Naive thymus-derived CD4-positive, alpha-beta T cell (primary cell): ENCODE measurements at regions of chr15 and their contacts with region 1.

Region 1: DNA sequence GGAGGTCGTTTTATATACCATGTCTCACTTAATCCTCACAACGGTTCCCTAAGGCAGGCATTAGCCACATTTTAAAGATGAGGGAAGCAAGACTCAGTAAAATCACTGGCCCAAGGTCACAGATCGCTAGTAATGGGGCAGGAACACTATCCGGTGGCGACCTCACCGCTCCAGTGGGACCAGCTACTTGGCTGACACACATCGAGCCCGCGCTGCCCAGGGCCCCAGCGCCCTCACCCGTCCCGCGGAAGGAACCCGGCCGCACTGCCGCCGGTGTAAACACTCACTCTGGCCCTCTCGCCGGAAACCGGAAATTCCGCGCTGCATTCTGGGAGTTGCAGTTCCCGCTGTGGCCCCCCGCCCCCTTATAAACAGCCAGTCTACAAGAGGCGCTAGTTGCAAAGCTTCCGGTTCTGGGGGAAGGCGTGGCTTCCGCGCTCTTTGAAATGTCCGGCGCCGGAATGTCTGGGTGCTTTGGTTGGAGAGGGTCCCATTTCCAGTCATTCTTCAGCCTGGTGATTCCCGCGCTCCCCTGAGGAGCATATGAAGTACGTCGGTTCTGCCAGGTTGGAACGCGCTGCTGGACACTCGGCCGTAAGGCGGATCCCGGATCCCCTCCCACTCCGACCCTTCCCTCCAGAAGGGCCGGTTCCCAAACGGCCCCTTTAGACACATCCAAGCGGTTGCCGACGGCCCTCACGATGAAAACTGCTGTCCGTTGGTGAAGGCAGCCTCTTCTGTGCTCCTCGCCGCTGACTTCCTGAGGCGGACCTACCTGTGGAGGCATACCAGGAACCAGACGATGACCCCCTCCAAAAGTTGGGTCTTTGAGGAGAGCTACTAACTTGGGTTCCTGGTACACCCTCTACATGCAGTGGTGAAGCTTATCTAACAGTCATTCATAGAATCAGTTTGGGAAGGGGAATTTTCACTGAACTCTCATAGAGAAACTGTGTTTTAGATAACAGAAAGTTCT is at the start of gene UBL7:
- DNase-seq: peak; percentile 81 to 95 (median 90)
- ATAC-seq: peak; percentile 99
- H3K4me3 ChIP-seq: peak within 1 kb of the TSS; percentile 91
- H3K4me3 Mint-ChIP-seq: peak within 1 kb of the TSS; percentile 88 to 98 (median 92)
- H3K27ac ChIP-seq: peak within 1 kb of the TSS; percentile 86
- H3K27ac Mint-ChIP-seq: peak within 1 kb of the TSS; percentile 78 to 96 (median 92)
- H3K4me1 ChIP-seq: peaks cover 8 to 15% of the 10 kb centered on the region in 2 donors
- H3K4me1 Mint-ChIP-seq: peaks cover 25 to 62% (median 55%) of the 10 kb centered on the region in 7 donors
- H3K27me3 ChIP-seq: no peaks in the 10 kb centered on the region
- H3K27me3 Mint-ChIP-seq: no peaks in the 10 kb centered on the region
- total RNA-seq, gene UBL7: 20.2 to 50.7 (median 40.6) TPM

Region 2: GRCh38 chr15:73991726-73992593 is 469.2 kb before region 1 on chr15 and contains the start of gene STOML1:
- CTCF ChIA-PET with region 1: no interaction called
- POLR2A ChIA-PET with region 1: no interaction called
- intact Hi-C with region 1: loop called (anchors 1 kb)
- DNase-seq: peak; percentile 85 to 99 (median 91)
- ATAC-seq: peak; percentile 91
- H3K4me3 ChIP-seq: peak within 1 kb of the TSS; percentile 68
- H3K4me3 Mint-ChIP-seq: peak within 1 kb of the TSS; percentile 82 to 100 (median 98)
- H3K27ac ChIP-seq: peak within 1 kb of the TSS; percentile 90
- H3K27ac Mint-ChIP-seq: peak within 1 kb of the TSS; percentile 72 to 99 (median 87)
- H3K4me1 ChIP-seq: peaks cover 33 to 35% of the 10 kb centered on the region in 2 donors
- H3K4me1 Mint-ChIP-seq: peaks cover 28 to 62% (median 49%) of the 10 kb centered on the region in 7 donors
- H3K27me3 ChIP-seq: no peaks in the 10 kb centered on the region
- H3K27me3 Mint-ChIP-seq: no peaks in the 10 kb centered on the region
- total RNA-seq, gene STOML1: 7.5 to 14.5 (median 12.3) TPM

Region 3: GRCh38 chr15:74318376-74318830 is 142.8 kb before region 1 on chr15:
- CTCF ChIA-PET with region 1: no interaction called
- POLR2A ChIA-PET with region 1: no interaction called
- intact Hi-C with region 1: no loop called
- DNase-seq: no peak
- ATAC-seq: no peak
- H3K4me3 ChIP-seq: no peak overlapping the region
- H3K4me3 Mint-ChIP-seq: no peak overlapping the region
- H3K27ac ChIP-seq: no peak overlapping the region
- H3K27ac Mint-ChIP-seq: no peak overlapping the region
- H3K4me1 ChIP-seq: peaks cover 11 to 20% of the 10 kb centered on the region in 2 donors
- H3K4me1 Mint-ChIP-seq: peaks cover 15 to 35% (median 32%) of the 10 kb centered on the region in 7 donors
- H3K27me3 ChIP-seq: no peaks in the 10 kb centered on the region
- H3K27me3 Mint-ChIP-seq: no peaks in the 10 kb centered on the region

Region 4: DNA sequence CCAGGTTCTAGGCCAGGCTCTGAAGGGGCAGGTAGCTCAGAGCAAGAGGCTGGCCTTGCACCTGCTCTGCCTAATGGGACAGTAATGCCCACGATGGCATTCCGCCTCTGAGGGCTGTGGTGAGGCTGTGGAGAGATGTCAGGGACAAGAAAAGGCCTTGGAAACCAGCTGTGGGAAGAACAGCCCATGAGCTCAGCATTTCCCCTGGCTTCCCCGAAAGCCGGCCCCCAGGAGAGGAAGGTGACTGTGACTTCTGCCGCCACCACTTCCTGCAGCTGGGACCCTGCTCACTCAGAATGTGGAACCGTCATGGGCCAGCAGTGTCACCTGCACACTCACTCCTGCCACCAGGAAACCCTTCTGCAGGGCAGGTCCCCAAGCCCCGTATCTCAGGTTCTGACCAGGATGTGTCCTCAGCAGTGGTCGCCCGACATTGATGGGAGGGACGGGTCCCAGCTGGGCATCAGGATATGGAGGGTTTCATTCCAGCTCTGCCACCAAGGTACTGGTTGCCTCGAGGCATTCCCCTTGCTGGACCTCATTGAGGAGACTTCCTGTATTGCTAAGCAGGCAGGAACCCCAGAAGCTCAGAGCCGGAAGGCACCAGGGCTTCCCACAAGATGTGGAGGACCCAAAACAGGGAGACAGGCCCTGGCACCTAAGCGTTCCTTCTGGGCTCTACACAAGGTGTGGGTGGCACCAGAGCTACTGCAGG is 58.1 kb before region 1 on chr15:
- CTCF ChIA-PET with region 1: no interaction called
- POLR2A ChIA-PET with region 1: interaction called, 3 read pairs
- intact Hi-C with region 1: loop called in 1 of 2 experiments (anchors 2 kb)
- DNase-seq: peak in 6 of 9 donors; percentile 26 to 80 (median 32)
- ATAC-seq: peak; percentile 75
- H3K4me3 ChIP-seq: peak overlapping the region; percentile 10
- H3K4me3 Mint-ChIP-seq: peak overlapping the region in 9 of 10 donors; percentile 19 to 67 (median 49)
- H3K27ac ChIP-seq: no peak overlapping the region
- H3K27ac Mint-ChIP-seq: peak overlapping the region in 7 of 9 donors; percentile 2 to 85 (median 49)
- H3K4me1 ChIP-seq: peaks cover 43 to 57% of the 10 kb centered on the region in 2 donors
- H3K4me1 Mint-ChIP-seq: peaks cover 40 to 70% (median 53%) of the 10 kb centered on the region in 7 donors
- H3K27me3 ChIP-seq: no peaks in the 10 kb centered on the region
- H3K27me3 Mint-ChIP-seq: no peaks in the 10 kb centered on the region

Region 5: GRCh38 chr15:74449643-74450205 is 11.4 kb before region 1 on chr15:
- CTCF ChIA-PET with region 1: no interaction called
- POLR2A ChIA-PET with region 1: no interaction called
- intact Hi-C with region 1: no loop called
- DNase-seq: no peak
- ATAC-seq: no peak
- H3K4me3 ChIP-seq: no peak overlapping the region
- H3K4me3 Mint-ChIP-seq: no peak overlapping the region
- H3K27ac ChIP-seq: no peak overlapping the region
- H3K27ac Mint-ChIP-seq: peak overlapping the region in 1 of 9 donors; percentile 49
- H3K4me1 ChIP-seq: no peaks in the 10 kb centered on the region
- H3K4me1 Mint-ChIP-seq: peaks cover 0 to 17% (median 3%) of the 10 kb centered on the region in 7 donors
- H3K27me3 ChIP-seq: no peaks in the 10 kb centered on the region
- H3K27me3 Mint-ChIP-seq: no peaks in the 10 kb centered on the region

Region 6: DNA sequence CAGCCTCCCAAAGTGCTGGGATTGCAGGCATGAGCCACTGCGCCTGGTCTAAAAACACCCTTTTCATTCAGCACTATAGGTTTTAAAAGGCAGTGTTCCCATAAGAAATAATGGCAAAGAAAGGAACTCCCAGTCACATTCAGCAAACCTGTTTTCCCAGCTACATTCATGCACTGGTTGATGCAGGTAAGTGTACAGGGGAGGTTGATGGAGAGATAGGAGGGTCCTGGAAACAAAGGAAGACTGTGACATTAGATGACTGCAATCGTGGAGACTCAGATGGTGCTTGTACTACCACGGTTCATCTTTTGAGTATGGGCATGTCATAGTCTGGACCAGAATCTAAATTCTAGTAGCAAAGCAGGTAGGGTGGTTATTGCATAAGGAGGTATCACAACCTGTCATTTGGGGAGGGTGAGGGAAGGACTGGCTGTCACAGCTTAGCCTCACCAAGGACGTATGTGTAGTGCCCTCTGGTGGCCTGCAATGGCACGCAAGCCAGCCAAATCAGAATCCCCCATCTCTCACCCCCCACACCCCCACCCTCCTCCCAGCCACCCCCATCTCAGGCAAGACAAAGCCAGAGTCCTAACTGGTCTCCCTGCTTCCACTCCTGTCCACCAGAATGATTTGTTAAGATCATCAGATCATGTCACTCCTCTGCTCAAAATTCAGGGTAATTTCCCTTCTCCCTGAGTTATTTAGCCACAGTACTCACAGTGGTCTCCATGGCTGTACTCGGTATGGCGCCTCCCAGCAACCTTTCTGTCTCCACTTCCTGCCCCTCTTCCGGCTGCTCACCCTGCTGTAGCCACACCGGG is 28.6 kb after region 1 on chr15:
- CTCF ChIA-PET with region 1: no interaction called
- POLR2A ChIA-PET with region 1: no interaction called
- intact Hi-C with region 1: loop called (anchors 1 kb)
- DNase-seq: peak; percentile 26 to 67 (median 51)
- ATAC-seq: peak; percentile 97
- H3K4me3 ChIP-seq: no peak overlapping the region
- H3K4me3 Mint-ChIP-seq: peak overlapping the region in 7 of 10 donors; percentile 7 to 40 (median 25)
- H3K27ac ChIP-seq: no peak overlapping the region
- H3K27ac Mint-ChIP-seq: peak overlapping the region in 6 of 9 donors; percentile 39 to 71 (median 62)
- H3K4me1 ChIP-seq: peaks cover 5 to 11% of the 10 kb centered on the region in 2 donors
- H3K4me1 Mint-ChIP-seq: peaks cover 7 to 20% (median 13%) of the 10 kb centered on the region in 7 donors
- H3K27me3 ChIP-seq: no peaks in the 10 kb centered on the region
- H3K27me3 Mint-ChIP-seq: no peaks in the 10 kb centered on the region

Region 7: GRCh38 chr15:74695597-74696397 is 234.6 kb after region 1 on chr15 and contains the start of gene EDC3:
- CTCF ChIA-PET with region 1: no interaction called
- POLR2A ChIA-PET with region 1: no interaction called
- intact Hi-C with region 1: loop called in 1 of 2 experiments (anchors 1 kb)
- DNase-seq: peak; percentile 69 to 87 (median 84)
- ATAC-seq: peak; percentile 93
- H3K4me3 ChIP-seq: peak within 1 kb of the TSS; percentile 71
- H3K4me3 Mint-ChIP-seq: peak within 1 kb of the TSS; percentile 96 to 100 (median 100)
- H3K27ac ChIP-seq: peak within 1 kb of the TSS; percentile 86
- H3K27ac Mint-ChIP-seq: peak within 1 kb of the TSS; percentile 97 to 100 (median 99)
- H3K4me1 ChIP-seq: peaks cover 12 to 14% of the 10 kb centered on the region in 2 donors
- H3K4me1 Mint-ChIP-seq: peaks cover 27 to 54% (median 48%) of the 10 kb centered on the region in 7 donors
- H3K27me3 ChIP-seq: no peaks in the 10 kb centered on the region
- H3K27me3 Mint-ChIP-seq: peaks cover 0 to 3% (median 0%) of the 10 kb centered on the region in 5 donors
- total RNA-seq, gene EDC3: 29.0 to 45.3 (median 38.7) TPM

Region 8: DNA sequence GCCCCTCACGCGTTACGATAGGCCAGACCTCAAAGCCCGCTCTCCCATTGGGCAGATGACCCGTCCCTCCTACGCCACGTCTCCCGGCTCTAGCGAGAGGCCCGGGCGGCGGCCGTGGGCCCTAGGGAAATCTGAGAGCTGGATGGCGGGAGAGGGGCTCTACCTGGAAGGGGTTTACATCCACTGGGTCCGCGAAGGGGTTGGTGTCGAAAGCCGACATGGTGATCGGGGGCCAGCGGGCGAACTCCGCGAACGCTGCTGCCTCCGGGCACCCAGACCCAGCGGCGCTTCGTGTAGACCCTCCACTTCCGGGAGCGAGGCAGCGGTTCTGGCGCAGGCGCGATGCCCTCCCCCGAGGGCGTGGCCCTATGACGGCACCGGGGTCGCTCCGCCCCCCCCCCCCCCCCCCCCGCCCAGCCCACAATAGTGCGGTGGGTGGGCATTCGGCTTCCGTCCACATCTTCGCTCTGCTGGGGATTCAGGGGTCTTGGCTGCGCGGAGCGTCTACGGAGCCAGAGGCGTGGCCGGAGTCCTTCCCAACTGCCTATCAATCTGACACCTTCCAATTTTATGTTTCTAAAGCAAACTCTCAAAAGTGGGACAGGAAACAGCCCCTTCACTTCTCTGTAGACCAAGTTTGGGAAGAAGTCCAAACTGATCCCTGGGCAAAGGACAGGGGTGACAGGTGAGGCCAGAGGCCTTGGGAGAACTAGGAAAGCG is 412.0 kb after region 1 on chr15 and contains the start of gene SCAMP2:
- CTCF ChIA-PET with region 1: no interaction called
- POLR2A ChIA-PET with region 1: no interaction called
- intact Hi-C with region 1: loop called in 1 of 2 experiments (anchors 1 kb)
- DNase-seq: peak; percentile 83 to 94 (median 91)
- ATAC-seq: peak; percentile 95
- H3K4me3 ChIP-seq: peak within 1 kb of the TSS; percentile 86
- H3K4me3 Mint-ChIP-seq: peak within 1 kb of the TSS; percentile 92 to 100 (median 98)
- H3K27ac ChIP-seq: peak within 1 kb of the TSS; percentile 98
- H3K27ac Mint-ChIP-seq: peak within 1 kb of the TSS; percentile 88 to 99 (median 96)
- H3K4me1 ChIP-seq: peaks cover 38 to 39% of the 10 kb centered on the region in 2 donors
- H3K4me1 Mint-ChIP-seq: peaks cover 31 to 54% (median 45%) of the 10 kb centered on the region in 7 donors
- H3K27me3 ChIP-seq: no peaks in the 10 kb centered on the region
- H3K27me3 Mint-ChIP-seq: peaks cover 0 to 8% (median 0%) of the 10 kb centered on the region in 5 donors
- total RNA-seq, gene SCAMP2: 78.9 to 130 (median 116) TPM

Region 9: GRCh38 chr15:74956648-74957300 is 495.6 kb after region 1 on chr15 and contains the start of gene RPP25:
- CTCF ChIA-PET with region 1: no interaction called
- POLR2A ChIA-PET with region 1: no interaction called
- intact Hi-C with region 1: loop called in 1 of 2 experiments (anchors 10 kb)
- DNase-seq: peak; percentile 32 to 82 (median 49)
- ATAC-seq: peak; percentile 92
- H3K4me3 ChIP-seq: peak within 1 kb of the TSS; percentile 67
- H3K4me3 Mint-ChIP-seq: peak within 1 kb of the TSS; percentile 68 to 83 (median 81)
- H3K27ac ChIP-seq: peak within 1 kb of the TSS; percentile 1
- H3K27ac Mint-ChIP-seq: no peak within 1 kb of the TSS
- H3K4me1 ChIP-seq: peaks cover 17 to 23% of the 10 kb centered on the region in 2 donors
- H3K4me1 Mint-ChIP-seq: peaks cover 14 to 40% (median 31%) of the 10 kb centered on the region in 7 donors
- H3K27me3 ChIP-seq: peaks cover 9 to 10% of the 10 kb centered on the region in 2 donors
- H3K27me3 Mint-ChIP-seq: peaks cover 25 to 47% (median 27%) of the 10 kb centered on the region in 5 donors
- total RNA-seq, gene RPP25: 0.95 to 5.8 (median 3.3) TPM

Region 10: DNA sequence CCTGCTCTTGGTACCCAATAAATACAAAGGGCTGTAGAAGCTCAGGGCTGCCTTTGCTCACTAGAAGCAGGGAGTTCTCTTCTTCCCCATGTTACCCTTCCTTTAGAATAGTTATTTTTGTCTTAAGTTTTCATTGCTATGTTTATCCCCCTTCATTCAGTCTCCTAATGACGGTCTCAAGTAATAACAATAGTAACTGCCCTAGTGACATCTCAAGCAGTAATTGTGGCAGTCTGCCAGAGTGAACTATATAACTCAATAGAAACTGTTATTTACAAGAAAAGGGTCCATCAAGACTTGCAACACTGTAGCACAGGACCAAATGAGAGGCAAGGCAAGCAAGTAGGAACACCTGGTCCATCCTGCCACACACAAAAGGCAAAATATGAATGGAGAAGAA is 1022.8 kb after region 1 on chr15:
- CTCF ChIA-PET with region 1: no interaction called
- POLR2A ChIA-PET with region 1: no interaction called
- intact Hi-C with region 1: no loop called
- DNase-seq: no peak
- ATAC-seq: no peak
- H3K4me3 ChIP-seq: no peak overlapping the region
- H3K4me3 Mint-ChIP-seq: no peak overlapping the region
- H3K27ac ChIP-seq: no peak overlapping the region
- H3K27ac Mint-ChIP-seq: no peak overlapping the region
- H3K4me1 ChIP-seq: no peaks in the 10 kb centered on the region
- H3K4me1 Mint-ChIP-seq: peaks cover 0 to 3% (median 0%) of the 10 kb centered on the region in 7 donors
- H3K27me3 ChIP-seq: no peaks in the 10 kb centered on the region
- H3K27me3 Mint-ChIP-seq: no peaks in the 10 kb centered on the region